Activated B cell treated with CpG ODN at 0.5 μM for 24 hours (primary cell): ENCODE measurements at regions of chr11 and their contacts with region 1.

Region 1: DNA sequence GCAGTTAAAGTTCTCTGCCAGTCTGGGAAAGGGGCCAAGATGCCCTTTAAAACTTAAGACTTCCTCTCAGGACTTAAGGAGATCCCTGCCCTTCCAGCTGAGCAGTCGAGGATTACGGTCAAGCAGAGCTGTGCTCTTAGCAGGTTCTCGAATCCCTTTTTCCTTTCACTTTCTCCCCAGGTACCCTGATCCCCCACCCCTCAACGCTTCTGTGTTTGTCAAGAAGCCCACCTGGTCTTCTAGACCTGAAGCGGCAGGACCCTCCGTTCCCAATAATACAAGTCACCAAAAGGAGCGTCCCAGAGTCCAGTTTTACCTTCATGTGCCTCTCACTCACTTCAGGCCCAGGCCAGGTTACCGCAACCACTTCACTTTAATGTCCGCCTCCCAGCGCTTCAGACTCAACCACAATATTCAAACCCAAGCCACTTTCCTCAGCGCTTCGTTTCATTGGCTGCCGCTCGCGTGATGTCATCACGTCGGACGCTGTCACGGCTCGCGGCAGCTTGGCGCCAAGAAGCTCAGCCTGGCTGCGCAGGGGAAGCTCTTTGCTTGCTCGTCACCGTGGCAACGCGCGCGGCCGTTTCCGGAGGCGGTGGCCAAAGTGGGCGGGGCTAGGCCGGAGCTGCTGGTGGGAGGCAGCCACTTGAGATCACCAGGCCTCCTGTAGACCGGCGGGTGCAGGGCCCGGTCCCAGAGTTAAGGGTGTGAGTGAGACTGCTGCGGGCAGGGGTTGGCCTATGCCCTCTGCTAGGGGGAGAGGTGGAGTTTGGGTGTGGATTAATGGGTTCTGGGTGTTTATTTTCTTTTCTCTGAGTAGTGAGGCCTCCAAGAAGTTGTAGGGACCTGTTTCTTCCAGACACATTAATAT is at the starts of genes KIF18A and METTL15:
- DNase-seq: peak; percentile 100
- ATAC-seq: peak; percentile 89
- H3K4me3 Mint-ChIP-seq: peak within 1 kb of the TSS; percentile 98
- H3K27ac Mint-ChIP-seq: peak within 1 kb of the TSS; percentile 99
- H3K4me1 Mint-ChIP-seq: peaks cover 55% of the 10 kb centered on the region
- H3K27me3 Mint-ChIP-seq: no peaks in the 10 kb centered on the region
- CTCF ChIP-seq: no peak
- total RNA-seq, gene KIF18A: 4.1 and 4.4 TPM in 2 replicates
- total RNA-seq, gene METTL15: 13.6 and 14.2 TPM in 2 replicates

Region 2: GRCh38 chr11:27506200-27507182 is 601.5 kb before region 1 on chr11 and contains the start of gene LIN7C:
- CTCF ChIA-PET with region 1: no interaction called
- POLR2A ChIA-PET with region 1: no interaction called
- intact Hi-C with region 1: loop called (anchors 1 kb)
- DNase-seq: peak; percentile 72
- ATAC-seq: peak; percentile 93
- H3K4me3 Mint-ChIP-seq: peak within 1 kb of the TSS; percentile 100
- H3K27ac Mint-ChIP-seq: peak within 1 kb of the TSS; percentile 98
- H3K4me1 Mint-ChIP-seq: peaks cover 45% of the 10 kb centered on the region
- H3K27me3 Mint-ChIP-seq: no peaks in the 10 kb centered on the region
- CTCF ChIP-seq: no peak
- total RNA-seq, gene LIN7C: 20.8 and 23.5 TPM in 2 replicates

Region 3: GRCh38 chr11:27726981-27727380 is 381.0 kb before region 1 on chr11:
- CTCF ChIA-PET with region 1: no interaction called
- POLR2A ChIA-PET with region 1: no interaction called
- intact Hi-C with region 1: no loop called
- DNase-seq: no peak
- ATAC-seq: no peak
- H3K4me3 Mint-ChIP-seq: no peak overlapping the region
- H3K27ac Mint-ChIP-seq: no peak overlapping the region
- H3K4me1 Mint-ChIP-seq: peaks cover 3% of the 10 kb centered on the region
- H3K27me3 Mint-ChIP-seq: peaks cover 27% of the 10 kb centered on the region
- CTCF ChIP-seq: no peak

Region 4: GRCh38 chr11:28058333-28058732 is 49.6 kb before region 1 on chr11:
- CTCF ChIA-PET with region 1: no interaction called
- POLR2A ChIA-PET with region 1: no interaction called
- intact Hi-C with region 1: no loop called
- DNase-seq: no peak
- ATAC-seq: no peak
- H3K4me3 Mint-ChIP-seq: no peak overlapping the region
- H3K27ac Mint-ChIP-seq: no peak overlapping the region
- H3K4me1 Mint-ChIP-seq: no peaks in the 10 kb centered on the region
- H3K27me3 Mint-ChIP-seq: no peaks in the 10 kb centered on the region
- CTCF ChIP-seq: no peak